Dendritic cell treated with granulocyte-macrophage colony-stimulating factor and Interleukin-4, amounts not matched to agents 40 ng/mL and 50 ng/mL, for 4 days (primary cell): ENCODE measurements at regions of chr20 and their contacts with region 1.

Region 1: GRCh38 chr20:23027721-23028120 is 7.4 kb upstream of the SSTR4 start:
- H3K4me3 Mint-ChIP-seq: no peak overlapping the region
- H3K27ac Mint-ChIP-seq: no peak overlapping the region
- H3K4me1 Mint-ChIP-seq: peaks cover 61% of the 10 kb centered on the region
- H3K27me3 Mint-ChIP-seq: peaks cover 30% of the 10 kb centered on the region

Region 2: DNA sequence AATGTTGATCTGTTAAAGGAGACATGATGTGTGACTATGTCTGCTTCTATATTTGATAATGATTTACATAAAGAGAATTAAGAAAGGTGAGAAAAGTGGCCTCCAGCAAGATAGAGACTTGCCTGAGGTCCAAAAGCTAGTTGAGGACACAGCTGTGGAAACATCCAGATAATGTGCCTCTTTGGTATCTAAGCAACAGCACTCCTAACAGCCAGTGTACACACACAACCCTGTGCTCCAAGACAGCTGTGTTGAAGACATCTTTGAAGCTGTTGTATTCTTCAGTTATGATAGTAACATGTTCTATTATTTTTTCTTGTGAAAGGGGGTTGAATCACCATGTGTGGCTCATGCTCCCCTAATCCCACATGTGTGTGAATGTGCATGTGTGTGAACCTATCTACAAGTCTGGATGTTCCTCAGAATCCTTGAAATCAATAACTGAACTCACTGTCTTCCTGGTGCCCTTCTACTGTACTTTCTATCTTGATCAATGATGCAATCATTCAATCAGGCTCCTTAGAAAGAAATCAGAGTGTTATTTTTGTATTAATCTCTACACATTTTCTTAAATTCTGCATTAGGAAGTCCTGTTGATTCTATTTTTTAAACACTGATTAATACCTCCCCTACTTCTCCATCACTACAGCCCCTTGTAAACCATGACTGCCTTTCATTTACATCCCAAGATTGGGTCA is 109.3 kb before region 1 on chr20:
- intact Hi-C with region 1: loop called (anchors 10 kb)
- H3K4me3 Mint-ChIP-seq: no peak overlapping the region
- H3K27ac Mint-ChIP-seq: no peak overlapping the region
- H3K4me1 Mint-ChIP-seq: peaks cover 15% of the 10 kb centered on the region
- H3K27me3 Mint-ChIP-seq: peaks cover 92% of the 10 kb centered on the region

Region 3: DNA sequence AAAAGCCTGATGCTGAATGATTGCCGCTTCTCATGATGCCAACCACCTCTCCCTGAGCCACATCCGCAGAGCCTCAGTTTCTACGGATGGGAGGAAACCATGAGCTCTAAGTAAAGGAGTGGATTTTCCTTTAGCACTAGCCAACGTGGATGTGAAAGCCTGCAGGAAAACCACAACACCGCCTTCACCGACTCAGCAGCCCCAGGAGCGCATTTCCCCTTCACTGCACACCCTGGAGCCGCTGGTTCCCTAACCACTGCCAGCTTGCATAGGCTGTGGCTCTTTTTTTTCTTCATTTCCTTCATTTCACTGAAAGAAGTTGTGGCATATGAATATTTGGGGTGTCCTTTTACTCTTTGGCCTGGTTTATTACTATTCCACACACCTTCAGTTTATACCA is 43.1 kb before region 1 on chr20:
- intact Hi-C with region 1: loop called (anchors 5 kb)
- H3K4me3 Mint-ChIP-seq: no peak overlapping the region
- H3K27ac Mint-ChIP-seq: no peak overlapping the region
- H3K4me1 Mint-ChIP-seq: peaks cover 30% of the 10 kb centered on the region
- H3K27me3 Mint-ChIP-seq: peaks cover 62% of the 10 kb centered on the region

Region 4: DNA sequence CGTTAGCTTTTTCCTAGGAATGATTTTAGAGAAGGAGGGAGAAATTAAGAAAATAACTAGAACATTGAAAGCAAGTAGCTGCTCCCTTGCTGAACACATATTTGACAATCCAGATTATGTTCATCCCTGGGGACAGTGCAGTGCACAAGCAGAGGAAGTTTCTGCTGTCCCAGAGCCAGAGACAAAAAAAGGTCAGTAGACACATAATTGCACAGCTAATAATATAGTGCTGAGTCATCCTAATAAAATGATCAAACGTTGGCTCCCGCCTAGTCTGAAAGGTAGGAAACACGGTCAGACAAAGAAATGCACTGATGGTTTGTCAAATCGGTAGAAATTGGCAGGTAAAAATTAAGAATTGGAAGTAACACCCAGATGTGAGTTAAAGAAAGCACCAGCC is 14.3 kb before region 1 on chr20:
- intact Hi-C with region 1: no loop called
- H3K4me3 Mint-ChIP-seq: no peak overlapping the region
- H3K27ac Mint-ChIP-seq: no peak overlapping the region
- H3K4me1 Mint-ChIP-seq: peaks cover 9% of the 10 kb centered on the region
- H3K27me3 Mint-ChIP-seq: peaks cover 22% of the 10 kb centered on the region

Region 5: DNA sequence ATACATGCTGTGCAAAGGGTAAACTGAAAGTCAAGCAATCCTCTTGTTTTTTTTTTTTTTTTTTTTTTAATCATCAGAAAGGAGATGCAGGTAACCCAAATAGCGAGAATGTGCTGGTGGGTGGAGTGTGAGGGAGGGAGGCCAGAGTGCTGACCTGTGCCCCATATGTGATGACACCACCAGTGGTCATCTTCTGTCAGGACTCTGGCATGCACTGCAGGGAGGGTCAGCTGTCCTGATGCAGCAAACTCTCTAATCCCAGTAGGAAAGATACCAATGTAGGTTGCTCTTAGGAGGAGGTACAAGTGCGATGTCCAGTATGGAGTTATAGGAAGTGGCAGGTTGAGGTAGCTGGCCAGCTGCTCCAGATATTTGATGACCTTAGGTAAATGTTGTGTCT is 663.9 kb after region 1 on chr20:
- intact Hi-C with region 1: no loop called
- H3K4me3 Mint-ChIP-seq: no peak overlapping the region
- H3K27ac Mint-ChIP-seq: no peak overlapping the region
- H3K4me1 Mint-ChIP-seq: peaks cover 6% of the 10 kb centered on the region
- H3K27me3 Mint-ChIP-seq: peaks cover 9% of the 10 kb centered on the region